Activated CD4-positive, alpha-beta T cell treated with anti-CD3 and anti-CD28 coated beads for 36 hours (primary cell): ENCODE measurements at regions of chr14 and their contacts with region 1.

Region 1: DNA sequence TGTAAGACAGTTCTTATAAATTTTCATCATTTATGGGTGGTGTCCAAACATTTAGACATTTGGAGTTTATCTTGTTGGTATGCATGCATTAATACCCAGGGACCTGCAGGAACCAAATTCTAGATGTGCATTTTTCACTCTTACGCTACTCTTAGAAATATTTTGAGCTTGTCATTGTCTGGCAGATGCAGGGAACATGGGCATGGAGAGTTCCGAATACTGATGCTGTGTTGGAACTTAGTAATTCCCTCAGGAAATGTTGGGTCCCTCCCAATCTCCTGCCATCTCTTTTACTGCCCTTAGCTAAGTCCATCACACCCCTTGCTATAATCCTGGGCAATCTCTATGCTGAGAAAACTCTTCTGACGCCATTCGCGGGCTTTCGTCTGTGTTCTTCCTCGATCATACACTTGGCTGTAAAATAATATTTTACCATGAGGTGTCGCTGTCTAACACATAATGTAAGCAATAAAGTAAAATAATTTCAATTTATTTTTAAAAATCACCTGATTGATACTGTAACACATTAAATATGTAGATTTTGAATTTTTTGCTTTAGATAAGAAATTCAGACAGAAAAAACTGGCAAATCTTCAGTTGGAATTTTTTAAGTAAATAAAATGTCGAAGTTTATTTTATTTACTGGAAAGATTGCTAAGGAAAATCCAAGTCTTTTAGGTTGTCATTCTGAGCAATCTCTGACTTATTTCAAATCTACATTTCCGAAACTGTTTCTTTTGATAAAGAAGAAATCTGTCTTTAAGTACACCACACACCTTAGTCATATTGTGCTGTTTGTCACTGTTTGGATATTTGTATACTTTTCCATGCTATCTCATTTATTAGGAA is 304.1 kb upstream of the SSTR1 start:
- DNase-seq: peak; percentile 25
- ATAC-seq: peak; percentile 42
- H3K4me3 Mint-ChIP-seq: no peak overlapping the region
- H3K27ac Mint-ChIP-seq: no peak overlapping the region
- H3K4me1 Mint-ChIP-seq: no peaks in the 10 kb centered on the region
- H3K27me3 Mint-ChIP-seq: peaks cover 11% of the 10 kb centered on the region

Region 2: GRCh38 chr14:37709419-37710195 is 194.0 kb before region 1 on chr14:
- CTCF ChIA-PET with region 1: no interaction called
- POLR2A ChIA-PET with region 1: no interaction called
- intact Hi-C with region 1: no loop called
- DNase-seq: no peak
- ATAC-seq: no peak
- H3K4me3 Mint-ChIP-seq: no peak overlapping the region
- H3K27ac Mint-ChIP-seq: no peak overlapping the region
- H3K4me1 Mint-ChIP-seq: no peaks in the 10 kb centered on the region
- H3K27me3 Mint-ChIP-seq: peaks cover 5% of the 10 kb centered on the region

Region 3: DNA sequence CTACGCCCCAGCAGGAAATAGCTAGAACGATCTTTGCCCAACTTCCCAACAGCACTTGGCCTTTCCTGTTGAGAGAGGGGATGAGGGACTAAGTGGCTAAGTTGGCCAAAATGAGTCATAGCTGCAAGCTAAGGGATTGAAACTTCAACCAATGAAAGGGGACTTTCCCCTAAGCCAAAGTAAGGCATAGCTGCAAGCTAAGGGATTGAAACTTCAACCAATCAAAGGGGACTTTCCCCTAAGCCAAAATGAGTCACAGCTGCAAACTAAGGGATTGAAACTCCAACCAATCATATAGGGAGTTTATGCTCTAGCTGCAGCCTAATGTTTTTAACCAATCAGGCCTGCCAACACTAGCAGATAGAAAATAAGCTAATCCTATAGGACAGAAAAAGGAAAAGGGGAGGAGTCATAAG is 203.7 kb after region 1 on chr14:
- CTCF ChIA-PET with region 1: no interaction called
- POLR2A ChIA-PET with region 1: no interaction called
- intact Hi-C with region 1: loop called in 1 of 2 experiments (anchors 5 kb)
- DNase-seq: peak; percentile 4
- ATAC-seq: peak; percentile 87
- H3K4me3 Mint-ChIP-seq: no peak overlapping the region
- H3K27ac Mint-ChIP-seq: no peak overlapping the region
- H3K4me1 Mint-ChIP-seq: peaks cover 12% of the 10 kb centered on the region
- H3K27me3 Mint-ChIP-seq: no peaks in the 10 kb centered on the region

Region 4: GRCh38 chr14:38197001-38197783 is 293.6 kb after region 1 on chr14:
- CTCF ChIA-PET with region 1: no interaction called
- POLR2A ChIA-PET with region 1: no interaction called
- intact Hi-C with region 1: loop called (anchors 1 kb)
- DNase-seq: no peak
- ATAC-seq: no peak
- H3K4me3 Mint-ChIP-seq: no peak overlapping the region
- H3K27ac Mint-ChIP-seq: no peak overlapping the region
- H3K4me1 Mint-ChIP-seq: peaks cover 3% of the 10 kb centered on the region
- H3K27me3 Mint-ChIP-seq: no peaks in the 10 kb centered on the region

Region 5: GRCh38 chr14:38721822-38722431 is 818.4 kb after region 1 on chr14:
- CTCF ChIA-PET with region 1: no interaction called
- POLR2A ChIA-PET with region 1: no interaction called
- intact Hi-C with region 1: loop called in 1 of 2 experiments (anchors 10 kb)
- DNase-seq: peak; percentile 61
- ATAC-seq: peak; percentile 51
- H3K4me3 Mint-ChIP-seq: no peak overlapping the region
- H3K27ac Mint-ChIP-seq: no peak overlapping the region
- H3K4me1 Mint-ChIP-seq: no peaks in the 10 kb centered on the region
- H3K27me3 Mint-ChIP-seq: no peaks in the 10 kb centered on the region

Region 6: DNA sequence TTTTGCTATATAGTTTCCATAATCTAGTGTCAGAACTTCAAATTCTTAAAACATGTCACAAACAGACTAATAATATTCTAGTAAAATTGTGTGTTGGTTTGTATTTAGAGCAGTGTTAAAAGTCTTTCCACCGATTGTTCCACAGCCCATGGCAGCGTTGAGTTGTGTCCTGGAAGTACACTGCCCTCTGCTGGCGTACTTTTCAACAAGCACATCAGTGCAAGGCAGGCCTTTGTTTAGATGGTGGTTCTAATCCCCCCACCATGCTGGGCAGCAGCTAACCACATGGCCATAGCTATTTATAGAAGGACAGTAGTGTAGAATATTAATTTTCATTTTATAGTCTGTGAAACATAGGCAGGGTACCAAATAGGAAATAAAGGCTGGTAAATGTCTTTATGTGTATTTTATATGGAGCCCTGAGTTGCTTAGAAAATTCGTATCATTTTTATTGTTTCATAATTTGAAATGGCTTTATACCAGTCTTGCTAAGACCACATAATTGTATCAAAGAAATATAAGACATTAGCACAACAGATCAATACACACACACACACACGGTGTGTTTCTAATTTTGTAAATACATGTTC is 964.1 kb after region 1 on chr14:
- CTCF ChIA-PET with region 1: interaction called, 4 read pairs
- POLR2A ChIA-PET with region 1: no interaction called
- intact Hi-C with region 1: loop called (anchors 1 to 5 kb)
- DNase-seq: peak; percentile 78
- ATAC-seq: peak; percentile 78
- H3K4me3 Mint-ChIP-seq: no peak overlapping the region
- H3K27ac Mint-ChIP-seq: no peak overlapping the region
- H3K4me1 Mint-ChIP-seq: no peaks in the 10 kb centered on the region
- H3K27me3 Mint-ChIP-seq: peaks cover 6% of the 10 kb centered on the region